ENCODE measurements at regions of chr17 and their contacts with region 1.

Region 1: DNA sequence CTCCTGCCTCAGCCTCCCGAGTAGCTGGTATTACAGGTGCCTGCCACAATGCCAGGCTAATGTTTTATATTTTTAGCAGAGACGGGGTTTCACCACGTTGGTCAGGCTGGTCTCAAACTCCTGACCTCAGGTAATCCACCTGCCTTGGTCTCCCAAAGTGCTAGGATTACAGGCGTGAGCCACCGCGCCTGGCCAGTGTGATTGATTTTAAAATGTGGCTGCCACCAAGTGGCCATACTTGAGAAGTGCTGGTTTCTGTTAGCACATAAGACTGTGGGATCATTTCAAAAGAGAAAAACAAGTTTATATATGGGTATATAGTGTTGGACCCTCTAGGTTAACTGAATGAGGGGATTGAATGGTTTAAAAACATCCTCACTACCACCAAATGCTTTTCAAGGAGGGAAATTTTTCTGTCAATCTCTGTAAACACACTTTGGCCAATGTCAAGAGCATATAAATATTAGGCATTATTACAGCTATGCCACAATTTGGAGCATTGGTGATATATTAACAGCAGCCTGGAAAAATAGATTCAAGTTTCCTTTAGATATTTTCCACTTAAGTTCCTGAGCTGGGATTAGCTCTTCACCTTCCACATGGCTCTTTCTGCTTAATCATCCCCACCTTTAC is 13.5 kb upstream of the DHRS13 start:
- DNase-seq: no peak
- H3K4me3 Mint-ChIP-seq: no peak overlapping the region
- H3K27ac Mint-ChIP-seq: peak overlapping the region; percentile 35
- H3K4me1 Mint-ChIP-seq: peaks cover 9% of the 10 kb centered on the region
- H3K27me3 Mint-ChIP-seq: no peaks in the 10 kb centered on the region

Region 2: GRCh38 chr17:28398280-28398981 is 518.0 kb before region 1 on chr17:
- intact Hi-C with region 1: no loop called
- DNase-seq: no peak
- H3K4me3 Mint-ChIP-seq: no peak overlapping the region
- H3K27ac Mint-ChIP-seq: no peak overlapping the region
- H3K4me1 Mint-ChIP-seq: no peaks in the 10 kb centered on the region
- H3K27me3 Mint-ChIP-seq: no peaks in the 10 kb centered on the region

Region 3: GRCh38 chr17:28763804-28764266 is 152.6 kb before region 1 on chr17:
- intact Hi-C with region 1: loop called (anchors 1 kb)
- DNase-seq: peak; percentile 60
- H3K4me3 Mint-ChIP-seq: no peak overlapping the region
- H3K27ac Mint-ChIP-seq: no peak overlapping the region
- H3K4me1 Mint-ChIP-seq: peaks cover 13% of the 10 kb centered on the region
- H3K27me3 Mint-ChIP-seq: no peaks in the 10 kb centered on the region

Measured in activated T-helper 2 cell treated with anti-CD3 and anti-CD28 coated beads, Interferon-gamma antibody, Interleukin-2, Interleukin-4, amounts not matched to agents 10 μg/mL and 5 μg/mL and 100 μg/mL, durations not matched to agents 14 hours and 24 hours and 36 hours (primary cell).